ENCODE measurements at regions of chr4 and their contacts with region 1.

Region 1: GRCh38 chr4:15231265-15232091 is 196.4 kb upstream of the C1QTNF7 start:
- DNase-seq: peak; percentile 60
- CTCF ChIP-seq: peak; percentile 76

Region 2: DNA sequence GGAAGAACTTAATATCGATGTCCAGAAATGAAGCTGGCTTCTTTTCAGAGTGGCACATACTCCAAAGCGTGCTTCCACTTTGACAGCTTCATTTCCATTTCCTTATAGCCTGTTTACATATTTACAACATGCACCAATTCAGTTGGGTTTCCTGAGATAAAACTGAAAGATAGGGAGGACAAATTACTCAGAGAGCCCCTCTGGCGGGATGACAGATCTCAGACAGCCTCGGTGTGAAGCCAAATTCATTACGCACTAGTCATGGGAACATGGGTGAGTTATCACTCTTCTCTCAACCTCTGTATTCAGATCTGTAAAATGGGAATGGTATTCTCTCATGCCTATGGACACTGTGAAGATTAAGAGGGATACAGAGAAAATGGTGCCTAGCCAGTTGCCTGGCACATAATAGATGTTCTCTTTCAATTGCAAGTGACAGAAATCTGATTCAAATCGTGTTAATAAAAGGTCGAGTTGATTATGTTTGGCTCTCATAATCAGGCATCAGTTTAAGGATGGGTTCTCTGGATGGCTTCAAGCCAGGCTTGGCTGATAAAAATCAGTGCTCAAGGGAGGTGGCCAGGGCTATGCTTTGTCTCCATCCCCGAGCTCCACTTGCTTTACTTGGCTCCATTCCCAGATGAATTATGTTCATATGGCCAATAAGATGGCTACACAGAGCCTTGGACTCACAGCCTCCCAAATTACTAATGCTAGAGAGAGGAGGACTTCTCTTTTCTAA is 64.1 kb after region 1 on chr4:
- in situ Hi-C with region 1: no loop called
- DNase-seq: no peak
- CTCF ChIP-seq: no peak

Region 3: GRCh38 chr4:15396157-15396800 is 164.8 kb after region 1 on chr4:
- in situ Hi-C with region 1: loop called (anchors 10 kb)
- DNase-seq: peak; percentile 40
- CTCF ChIP-seq: peak; percentile 61

Region 4: GRCh38 chr4:15457406-15458201 is 226.1 kb after region 1 on chr4:
- in situ Hi-C with region 1: loop called (anchors 10 kb)
- DNase-seq: peak; percentile 29
- CTCF ChIP-seq: peak; percentile 44

Region 5: DNA sequence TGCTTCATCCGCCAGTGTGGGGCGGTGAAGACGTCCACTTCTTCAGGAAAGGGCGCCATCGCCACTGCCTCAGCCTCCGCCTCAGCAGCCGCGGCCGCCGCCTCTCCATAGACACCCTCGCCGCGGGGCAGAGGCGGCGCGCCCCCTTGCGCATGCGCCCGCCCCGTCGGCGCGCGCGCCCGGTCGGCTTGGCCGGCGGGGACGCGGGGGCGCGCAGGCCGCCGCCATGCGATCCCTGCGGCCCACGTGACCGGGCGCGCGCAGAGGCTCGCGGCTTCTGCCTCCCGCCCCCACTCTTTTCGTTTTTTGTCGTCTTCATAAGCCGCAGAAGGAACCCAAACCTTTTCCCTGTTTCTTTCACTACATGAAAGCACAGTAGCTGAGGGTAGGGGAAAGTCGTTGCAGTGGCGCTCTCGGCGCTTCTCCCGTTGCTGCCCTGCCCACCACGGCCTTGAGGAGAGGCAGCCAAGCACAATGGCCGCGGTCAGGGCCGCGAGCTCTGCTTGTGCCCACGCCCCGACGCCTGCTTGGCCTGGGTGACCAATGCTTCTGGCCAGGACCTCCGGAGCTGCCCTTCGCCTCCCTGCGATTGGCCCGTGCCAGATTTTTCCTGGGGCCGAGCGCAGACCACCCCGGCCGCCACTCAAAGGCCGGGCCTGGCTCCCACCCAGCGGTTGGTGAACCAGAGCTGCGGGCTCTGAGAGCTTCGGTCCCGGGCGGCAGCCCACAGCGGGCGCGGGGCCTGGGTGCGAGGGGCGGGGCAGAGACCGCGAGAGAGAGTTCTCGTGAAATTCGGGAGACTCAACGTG is 424.0 kb after region 1 on chr4 and contains the start of gene FBXL5:
- in situ Hi-C with region 1: loop called (anchors 25 kb)
- DNase-seq: peak; percentile 94
- CTCF ChIP-seq: no peak